Dendritic cell treated with granulocyte-macrophage colony-stimulating factor and Interleukin-4, amounts not matched to agents 40 ng/mL and 50 ng/mL, for 4 days (primary cell): ENCODE measurements at regions of chr15 and their contacts with region 1.

Region 1: GRCh38 chr15:47870956-47871625 is 153.8 kb downstream of the SEMA6D start:
- H3K4me3 Mint-ChIP-seq: no peak overlapping the region
- H3K27ac Mint-ChIP-seq: no peak overlapping the region
- H3K4me1 Mint-ChIP-seq: no peaks in the 10 kb centered on the region
- H3K27me3 Mint-ChIP-seq: no peaks in the 10 kb centered on the region

Region 2: GRCh38 chr15:47897525-47897924 is 26.4 kb after region 1 on chr15:
- intact Hi-C with region 1: no loop called
- H3K4me3 Mint-ChIP-seq: no peak overlapping the region
- H3K27ac Mint-ChIP-seq: no peak overlapping the region
- H3K4me1 Mint-ChIP-seq: no peaks in the 10 kb centered on the region
- H3K27me3 Mint-ChIP-seq: no peaks in the 10 kb centered on the region

Region 3: DNA sequence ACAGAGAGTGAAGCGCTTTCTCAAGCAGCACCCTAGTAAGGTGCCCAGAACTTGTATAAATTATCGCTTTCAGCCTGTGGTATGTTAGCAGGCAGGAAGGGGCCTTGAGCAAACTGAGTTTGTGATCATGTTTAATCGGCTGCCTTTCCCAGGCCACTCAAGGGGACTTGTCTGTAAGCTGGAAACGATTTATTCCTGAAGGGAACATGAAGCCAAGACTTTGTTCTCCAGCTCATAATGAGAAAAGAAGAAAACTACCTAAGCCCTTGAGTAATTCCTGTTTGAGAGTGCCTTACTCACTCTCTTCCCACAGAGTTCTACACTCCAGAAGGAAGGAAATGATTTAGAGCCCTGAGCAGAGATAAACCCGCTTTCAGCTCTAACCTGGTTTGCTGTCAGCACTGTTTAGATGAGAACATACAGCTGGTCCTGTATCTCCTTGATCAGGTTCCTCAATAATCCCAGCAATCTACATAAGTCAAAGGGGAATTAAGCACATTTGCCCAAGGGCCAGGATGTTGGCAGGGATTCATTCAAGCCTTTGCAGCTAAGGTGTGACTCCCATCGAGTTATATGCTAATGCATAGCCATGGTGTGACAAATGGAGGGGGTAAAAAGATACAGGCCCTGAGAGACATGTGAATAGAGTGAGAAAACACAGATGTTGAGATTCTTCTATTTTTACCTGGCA is 62.0 kb after region 1 on chr15:
- intact Hi-C with region 1: loop called (anchors 10 kb)
- H3K4me3 Mint-ChIP-seq: no peak overlapping the region
- H3K27ac Mint-ChIP-seq: no peak overlapping the region
- H3K4me1 Mint-ChIP-seq: no peaks in the 10 kb centered on the region
- H3K27me3 Mint-ChIP-seq: no peaks in the 10 kb centered on the region